Left ventricle myocardium superior (tissue), 1 donor: ENCODE measurements at regions of chr11 and their contacts with region 1.

Region 1: DNA sequence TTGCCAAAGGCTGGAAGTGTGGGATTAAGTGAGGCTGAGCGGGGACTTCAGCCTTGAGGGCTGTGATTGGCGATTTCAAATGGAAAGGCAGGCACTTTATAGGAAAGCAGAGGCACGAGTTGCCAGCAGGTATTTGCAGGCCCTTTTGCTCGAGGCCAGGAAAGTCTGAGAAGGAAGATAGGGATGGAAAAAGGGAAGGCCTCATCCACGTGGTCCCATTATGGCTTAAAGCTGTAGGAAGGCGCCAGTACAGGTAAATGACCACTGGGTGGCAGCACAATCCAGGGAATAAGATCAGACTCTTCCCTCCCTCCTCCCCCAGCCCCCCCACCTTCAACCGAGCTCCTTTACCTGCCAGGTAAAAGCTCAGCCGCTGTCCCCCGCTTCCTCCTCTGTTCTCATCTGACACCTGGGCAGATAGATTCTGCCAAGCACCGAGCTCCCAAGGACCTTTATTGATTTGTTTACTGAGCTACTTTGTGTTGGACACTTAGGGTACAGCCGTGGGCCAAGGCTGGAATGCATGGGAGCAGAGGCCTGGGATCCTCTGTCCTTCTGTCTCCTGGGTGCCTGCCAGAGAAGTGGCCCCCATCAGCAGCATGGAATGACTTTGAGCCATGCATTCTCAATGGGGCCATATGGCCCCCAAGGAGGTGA is 7.5 kb downstream of the P2RX3 start:
- DNase-seq: peak; percentile 64
- ATAC-seq: peak; percentile 78

Region 2: GRCh38 chr11:57444362-57445121 is 98.9 kb after region 1 on chr11:
- intact Hi-C with region 1: no loop called
- DNase-seq: no peak
- ATAC-seq: no peak

Region 3: DNA sequence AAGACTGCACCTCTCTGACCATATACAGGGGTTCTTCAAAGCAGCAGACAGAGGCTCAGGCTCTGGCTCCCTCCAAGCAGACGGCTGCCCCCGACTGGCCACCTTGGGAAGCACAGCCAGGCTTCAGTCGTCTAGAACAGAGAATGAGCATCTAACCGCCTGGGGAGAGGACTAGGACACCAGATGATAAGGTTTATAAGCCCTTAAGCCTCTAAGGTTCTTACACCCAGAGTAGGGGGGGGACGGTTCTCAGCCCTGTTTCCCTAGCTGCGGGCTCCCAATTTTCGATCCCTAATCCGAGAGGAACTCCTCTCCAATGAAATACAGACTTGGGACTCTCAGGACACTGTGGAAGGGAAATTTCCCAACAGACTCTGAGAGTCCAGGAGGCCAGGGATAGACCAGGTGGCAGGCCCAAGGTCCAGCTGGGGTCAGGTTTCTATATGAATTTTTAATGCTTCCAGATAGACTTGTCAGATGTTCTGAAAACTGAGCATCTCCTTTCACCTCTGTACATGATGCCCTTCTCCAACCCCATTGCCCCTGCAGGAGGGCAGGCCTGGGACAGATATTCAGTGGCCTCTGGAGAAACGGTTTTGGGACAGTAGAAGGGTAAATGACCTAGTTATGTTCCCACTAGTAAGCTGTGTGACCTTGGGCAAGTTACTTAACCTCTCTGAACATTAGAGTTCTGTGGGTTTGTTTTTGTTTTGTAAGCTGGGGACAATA is 134.9 kb after region 1 on chr11:
- intact Hi-C with region 1: loop called (anchors 5 kb)
- DNase-seq: peak; percentile 79
- ATAC-seq: peak; percentile 38